ENCODE measurements at regions of chr9 and their contacts with region 1.

Region 1: GRCh38 chr9:34069831-34070230 is 21.1 kb upstream of the UBAP2 start:
- DNase-seq: no peak
- H3K4me3 ChIP-seq: no peak overlapping the region
- H3K27ac ChIP-seq: no peak overlapping the region
- H3K4me1 ChIP-seq: peaks cover 10 to 55% (median 23%) of the 10 kb centered on the region in 3 donors
- H3K27me3 ChIP-seq: no peaks in the 10 kb centered on the region
- CTCF ChIP-seq: no peak
- POLR2A ChIP-seq: no peak

Region 2: GRCh38 chr9:33924978-33925797 is 144.6 kb before region 1 on chr9:
- intact Hi-C with region 1: loop called (anchors 10 kb)
- DNase-seq: no peak
- H3K4me3 ChIP-seq: no peak overlapping the region
- H3K27ac ChIP-seq: peak overlapping the region in 2 of 4 donors; percentile 3 to 12
- H3K4me1 ChIP-seq: no peaks in the 10 kb centered on the region
- H3K27me3 ChIP-seq: no peaks in the 10 kb centered on the region
- CTCF ChIP-seq: peak in 5 of 6 experiments; percentile 27 to 58 (median 37)
- POLR2A ChIP-seq: no peak

Region 3: GRCh38 chr9:34211395-34211794 is 141.6 kb after region 1 on chr9:
- intact Hi-C with region 1: no loop called
- DNase-seq: no peak
- H3K4me3 ChIP-seq: no peak overlapping the region
- H3K27ac ChIP-seq: no peak overlapping the region
- H3K4me1 ChIP-seq: peaks cover 0 to 4% (median 0%) of the 10 kb centered on the region in 3 donors
- H3K27me3 ChIP-seq: no peaks in the 10 kb centered on the region
- CTCF ChIP-seq: no peak
- POLR2A ChIP-seq: no peak